ENCODE measurements at regions of chr1 and their contacts with region 1.

Region 1: DNA sequence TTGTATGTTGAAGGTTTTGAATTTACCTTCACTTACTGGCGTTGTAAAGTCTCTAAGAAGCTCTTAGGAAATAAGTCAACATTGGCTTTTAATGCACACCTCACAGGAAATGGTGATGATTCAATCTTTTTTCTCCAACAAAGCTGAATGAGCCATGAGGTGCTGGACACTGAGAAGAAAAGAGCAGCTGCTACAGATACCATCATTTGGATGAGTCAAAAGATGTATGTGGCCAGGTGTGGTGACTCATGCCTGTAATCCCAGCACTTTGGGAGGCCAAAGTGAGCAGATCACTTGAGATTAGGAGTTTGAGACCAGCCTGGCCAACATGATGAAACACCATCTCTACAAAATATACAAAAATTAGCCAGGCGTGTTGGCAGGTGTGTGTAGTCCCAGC is 3.3 kb upstream of the IL23R start:
- DNase-seq: peak; percentile 76
- H3K4me3 Mint-ChIP-seq: peak overlapping the region; percentile 42
- H3K27ac Mint-ChIP-seq: peak overlapping the region; percentile 83
- H3K4me1 Mint-ChIP-seq: peaks cover 63% of the 10 kb centered on the region
- H3K27me3 Mint-ChIP-seq: no peaks in the 10 kb centered on the region

Region 2: DNA sequence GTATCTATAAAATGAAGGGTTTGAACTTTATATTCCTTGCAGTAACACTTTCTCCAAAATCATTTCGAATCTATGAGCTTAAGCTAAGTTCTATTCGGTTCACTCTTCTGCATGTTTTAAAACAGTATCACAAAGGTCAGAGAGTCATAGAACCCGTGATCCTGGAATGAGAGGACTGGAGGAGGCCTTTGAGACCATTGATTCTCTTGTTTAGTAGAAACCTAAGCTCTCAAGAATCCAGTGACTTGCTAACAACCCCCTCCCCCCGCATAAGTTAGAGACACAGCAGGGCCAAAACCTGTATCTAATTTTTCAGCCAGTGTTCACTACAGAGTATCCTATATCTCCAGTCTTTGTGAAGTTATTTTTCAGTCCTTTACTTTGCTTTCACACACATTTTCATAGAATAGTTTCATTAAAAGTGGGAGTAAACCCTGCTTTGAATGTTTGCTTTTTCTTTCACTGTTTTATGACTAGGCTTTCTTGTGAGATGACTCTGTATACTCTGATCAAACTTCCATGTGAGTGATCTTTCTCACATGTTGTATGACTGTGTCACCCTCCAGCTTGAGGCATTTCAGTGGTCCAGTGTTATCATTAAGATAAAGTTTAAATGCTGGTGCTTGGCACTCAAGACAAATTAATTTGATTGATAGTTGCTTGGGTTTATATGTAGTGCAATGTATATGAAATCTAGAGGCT is 904.4 kb before region 1 on chr1:
- CTCF ChIA-PET with region 1: no interaction called
- intact Hi-C with region 1: loop called (anchors 2 kb)
- DNase-seq: peak; percentile 43
- H3K4me3 Mint-ChIP-seq: no peak overlapping the region
- H3K27ac Mint-ChIP-seq: peak overlapping the region; percentile 3
- H3K4me1 Mint-ChIP-seq: peaks cover 84% of the 10 kb centered on the region
- H3K27me3 Mint-ChIP-seq: no peaks in the 10 kb centered on the region

Region 3: DNA sequence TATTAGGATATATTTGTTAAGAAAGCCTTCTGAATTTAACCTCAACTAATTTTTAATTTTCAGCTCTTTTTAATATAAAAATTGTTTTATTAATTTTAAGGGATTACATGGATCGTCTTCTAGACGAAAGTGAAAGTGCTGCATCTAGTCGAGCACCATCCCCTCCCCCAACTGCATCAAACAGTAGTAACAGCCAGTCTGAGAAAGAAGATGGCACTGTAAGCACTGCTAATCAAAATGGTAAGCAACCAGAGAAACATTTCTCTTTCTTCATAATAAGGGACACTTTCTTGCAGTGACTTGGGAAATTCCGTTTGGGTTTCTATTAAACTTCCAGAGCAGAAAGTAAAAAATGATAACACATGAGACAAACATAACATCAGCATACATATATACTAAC is 181.3 kb before region 1 on chr1:
- CTCF ChIA-PET with region 1: no interaction called
- intact Hi-C with region 1: no loop called
- DNase-seq: peak; percentile 71
- H3K4me3 Mint-ChIP-seq: peak overlapping the region; percentile 51
- H3K27ac Mint-ChIP-seq: peak overlapping the region; percentile 87
- H3K4me1 Mint-ChIP-seq: peaks cover 50% of the 10 kb centered on the region
- H3K27me3 Mint-ChIP-seq: no peaks in the 10 kb centered on the region

Region 4: DNA sequence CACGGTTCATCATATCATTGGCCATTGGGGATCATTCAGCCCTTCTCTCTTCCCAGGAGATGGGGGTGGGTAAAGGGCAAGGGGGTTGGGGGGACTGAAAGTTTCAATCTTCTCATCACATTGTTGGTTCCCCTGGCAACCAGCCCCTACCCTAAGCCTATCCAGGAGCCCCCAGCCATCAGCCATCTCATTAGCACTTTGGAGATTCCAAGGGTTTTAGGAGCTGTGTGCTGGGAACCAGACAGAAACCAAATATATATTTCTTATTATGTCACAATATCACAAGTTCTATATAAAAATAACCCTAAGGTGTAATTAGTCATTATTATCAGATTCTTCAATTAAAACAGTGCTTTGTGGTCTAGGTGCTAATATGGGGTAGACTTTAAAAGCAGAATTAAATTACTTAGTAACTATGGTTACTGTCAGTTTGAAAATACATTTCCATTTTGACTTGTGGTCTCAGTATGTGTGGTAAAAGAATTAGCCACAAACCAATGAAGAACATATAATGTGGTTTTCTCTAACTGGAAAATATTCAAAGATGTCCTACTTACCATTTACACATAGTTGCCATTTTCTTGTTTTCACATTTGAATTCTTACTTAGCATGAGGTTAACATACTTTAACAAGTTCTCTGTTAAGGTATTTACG is 31.4 kb after region 1 on chr1:
- CTCF ChIA-PET with region 1: interaction called, 6 read pairs
- intact Hi-C with region 1: loop called (anchors 1 kb)
- DNase-seq: no peak
- H3K4me3 Mint-ChIP-seq: no peak overlapping the region
- H3K27ac Mint-ChIP-seq: no peak overlapping the region
- H3K4me1 Mint-ChIP-seq: peaks cover 39% of the 10 kb centered on the region
- H3K27me3 Mint-ChIP-seq: no peaks in the 10 kb centered on the region

Measured in activated naive CD4-positive, alpha-beta T cell treated with anti-CD3 and anti-CD28 coated beads for 36 hours (primary cell).